Activated naive CD4-positive, alpha-beta T cell treated with anti-CD3 and anti-CD28 coated beads for 36 hours (primary cell): ENCODE measurements at regions of chr11 and their contacts with region 1.

Region 1: GRCh38 chr11:117722082-117722481 is 74.9 kb downstream of the DSCAML1 start:
- DNase-seq: no peak
- H3K4me3 Mint-ChIP-seq: no peak overlapping the region
- H3K27ac Mint-ChIP-seq: no peak overlapping the region
- H3K4me1 Mint-ChIP-seq: no peaks in the 10 kb centered on the region
- H3K27me3 Mint-ChIP-seq: peaks cover 4% of the 10 kb centered on the region

Region 2: DNA sequence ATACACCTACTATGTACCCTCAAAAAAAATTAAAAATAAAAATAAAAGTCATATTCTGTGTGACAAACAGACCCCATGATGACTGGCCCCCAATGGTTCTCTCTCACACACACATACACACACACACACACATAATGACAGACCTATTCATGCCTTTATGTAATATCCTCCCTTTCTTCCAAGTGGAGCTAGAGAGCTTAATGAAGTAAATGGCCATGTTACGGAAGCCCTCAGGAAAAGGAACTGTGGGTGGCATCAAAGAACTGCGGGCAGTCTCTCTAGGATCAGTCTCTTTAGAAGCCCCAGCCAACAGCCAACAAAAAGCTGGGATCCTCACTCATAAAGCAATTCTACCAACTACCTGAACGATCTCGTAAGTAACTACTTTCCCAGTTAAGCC is 749.4 kb before region 1 on chr11:
- CTCF ChIA-PET with region 1: no interaction called
- intact Hi-C with region 1: no loop called
- DNase-seq: no peak
- H3K4me3 Mint-ChIP-seq: no peak overlapping the region
- H3K27ac Mint-ChIP-seq: no peak overlapping the region
- H3K4me1 Mint-ChIP-seq: peaks cover 20% of the 10 kb centered on the region
- H3K27me3 Mint-ChIP-seq: no peaks in the 10 kb centered on the region

Region 3: DNA sequence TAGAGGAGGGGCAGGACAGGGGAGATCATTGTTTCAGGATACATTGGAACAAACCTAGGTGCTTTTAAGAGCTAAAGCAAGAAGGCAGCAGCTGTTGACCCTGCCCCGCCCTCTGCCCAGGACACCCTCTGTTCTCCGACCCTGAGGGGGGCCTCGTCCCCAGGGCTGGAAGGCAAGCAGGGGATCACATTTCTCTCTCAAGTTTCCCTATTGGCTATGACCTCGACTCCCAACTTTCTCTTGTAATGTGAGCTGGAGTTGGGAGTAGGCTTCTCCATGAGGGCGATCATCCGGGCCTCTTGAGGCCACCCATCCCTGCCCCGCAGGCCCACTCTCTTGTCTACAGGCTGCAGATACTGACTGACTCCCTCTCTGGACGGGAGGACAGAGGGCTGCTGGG is 37.2 kb after region 1 on chr11:
- CTCF ChIA-PET with region 1: no interaction called
- intact Hi-C with region 1: no loop called
- DNase-seq: no peak
- H3K4me3 Mint-ChIP-seq: no peak overlapping the region
- H3K27ac Mint-ChIP-seq: no peak overlapping the region
- H3K4me1 Mint-ChIP-seq: no peaks in the 10 kb centered on the region
- H3K27me3 Mint-ChIP-seq: peaks cover 6% of the 10 kb centered on the region

Region 4: DNA sequence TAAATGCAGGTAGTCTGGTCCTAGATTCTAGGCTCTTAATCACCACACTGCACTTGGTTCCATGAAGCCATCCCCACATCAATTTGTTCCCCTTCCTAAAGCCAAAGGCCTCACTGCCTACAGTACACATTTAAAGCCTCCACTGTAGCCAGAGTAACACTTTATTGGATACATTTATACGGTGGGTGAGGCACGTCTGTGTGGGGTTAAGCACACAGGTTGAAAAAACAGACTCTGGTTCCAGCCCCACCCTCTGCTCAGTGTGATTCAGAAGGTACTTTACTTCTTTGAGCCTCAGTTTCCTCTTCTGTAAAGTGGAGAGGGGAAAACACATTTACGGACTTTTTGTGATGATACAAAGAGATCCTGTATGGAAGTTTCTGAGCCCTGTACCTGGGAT is 52.5 kb after region 1 on chr11:
- CTCF ChIA-PET with region 1: no interaction called
- intact Hi-C with region 1: loop called (anchors 2 kb)
- DNase-seq: no peak
- H3K4me3 Mint-ChIP-seq: no peak overlapping the region
- H3K27ac Mint-ChIP-seq: no peak overlapping the region
- H3K4me1 Mint-ChIP-seq: no peaks in the 10 kb centered on the region
- H3K27me3 Mint-ChIP-seq: peaks cover 12% of the 10 kb centered on the region